Activated CD8-positive, alpha-beta T cell treated with anti-CD3 and anti-CD28 coated beads, Interleukin-2, amount 10 ng/mL, durations not matched to agents 7 days and 5 days (primary cell): ENCODE measurements at regions of chr11 and their contacts with region 1.

Region 1: DNA sequence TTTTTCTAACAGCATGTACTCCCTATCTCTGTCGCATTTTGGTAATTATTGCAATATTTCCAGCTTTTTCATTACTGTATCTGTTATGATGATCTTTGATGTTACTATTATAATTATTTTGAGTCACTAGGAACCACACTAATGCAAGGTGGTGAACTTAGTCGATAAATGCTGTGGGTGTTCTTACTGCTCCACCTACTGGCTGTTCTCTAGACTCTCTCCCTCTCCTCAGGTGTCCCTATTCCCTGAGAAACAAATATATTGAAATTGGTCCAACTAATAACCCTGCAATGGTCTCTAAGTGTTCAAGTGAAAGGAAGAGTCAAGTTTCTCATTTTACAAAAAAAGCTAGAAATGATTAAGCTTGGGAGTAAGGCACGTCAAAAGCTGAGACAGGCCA is 10.5 kb downstream of the ARL14EP start:
- DNase-seq: no peak
- ATAC-seq: no peak
- H3K4me3 Mint-ChIP-seq: no peak overlapping the region
- H3K27ac Mint-ChIP-seq: no peak overlapping the region
- H3K4me1 Mint-ChIP-seq: peaks cover 12% of the 10 kb centered on the region
- H3K27me3 Mint-ChIP-seq: no peaks in the 10 kb centered on the region

Region 2: GRCh38 chr11:30128269-30128932 is 205.0 kb before region 1 on chr11:
- CTCF ChIA-PET with region 1: interaction called, 10 read pairs
- POLR2A ChIA-PET with region 1: no interaction called
- DNase-seq: peak; percentile 22
- ATAC-seq: no peak
- H3K4me3 Mint-ChIP-seq: no peak overlapping the region
- H3K27ac Mint-ChIP-seq: no peak overlapping the region
- H3K4me1 Mint-ChIP-seq: no peaks in the 10 kb centered on the region
- H3K27me3 Mint-ChIP-seq: no peaks in the 10 kb centered on the region

Region 3: GRCh38 chr11:30295178-30295885 is 38.1 kb before region 1 on chr11:
- CTCF ChIA-PET with region 1: no interaction called
- POLR2A ChIA-PET with region 1: no interaction called
- DNase-seq: no peak
- ATAC-seq: no peak
- H3K4me3 Mint-ChIP-seq: no peak overlapping the region
- H3K27ac Mint-ChIP-seq: no peak overlapping the region
- H3K4me1 Mint-ChIP-seq: no peaks in the 10 kb centered on the region
- H3K27me3 Mint-ChIP-seq: peaks cover 14% of the 10 kb centered on the region

Region 4: GRCh38 chr11:30314625-30315024 is 18.8 kb before region 1 on chr11:
- CTCF ChIA-PET with region 1: interaction called, 17 read pairs
- POLR2A ChIA-PET with region 1: no interaction called
- DNase-seq: no peak
- ATAC-seq: no peak
- H3K4me3 Mint-ChIP-seq: no peak overlapping the region
- H3K27ac Mint-ChIP-seq: no peak overlapping the region
- H3K4me1 Mint-ChIP-seq: peaks cover 19% of the 10 kb centered on the region
- H3K27me3 Mint-ChIP-seq: peaks cover 8% of the 10 kb centered on the region

Region 5: GRCh38 chr11:30322826-30323710 is 10.3 kb before region 1 on chr11 and contains the start of gene ARL14EP:
- CTCF ChIA-PET with region 1: interaction called, 16 read pairs
- POLR2A ChIA-PET with region 1: interaction called, 5 read pairs
- DNase-seq: peak; percentile 92
- ATAC-seq: peak; percentile 92
- H3K4me3 Mint-ChIP-seq: peak within 1 kb of the TSS; percentile 97
- H3K27ac Mint-ChIP-seq: peak within 1 kb of the TSS; percentile 98
- H3K4me1 Mint-ChIP-seq: peaks cover 46% of the 10 kb centered on the region
- H3K27me3 Mint-ChIP-seq: peaks cover 3% of the 10 kb centered on the region
- total RNA-seq, gene ARL14EP: 27.3 to 30.9 TPM

Region 6: GRCh38 chr11:30346068-30346688 is 12.8 kb after region 1 on chr11:
- CTCF ChIA-PET with region 1: interaction called, 11 read pairs
- POLR2A ChIA-PET with region 1: no interaction called
- DNase-seq: no peak
- ATAC-seq: no peak
- H3K4me3 Mint-ChIP-seq: no peak overlapping the region
- H3K27ac Mint-ChIP-seq: no peak overlapping the region
- H3K4me1 Mint-ChIP-seq: peaks cover 2% of the 10 kb centered on the region
- H3K27me3 Mint-ChIP-seq: no peaks in the 10 kb centered on the region

Region 7: DNA sequence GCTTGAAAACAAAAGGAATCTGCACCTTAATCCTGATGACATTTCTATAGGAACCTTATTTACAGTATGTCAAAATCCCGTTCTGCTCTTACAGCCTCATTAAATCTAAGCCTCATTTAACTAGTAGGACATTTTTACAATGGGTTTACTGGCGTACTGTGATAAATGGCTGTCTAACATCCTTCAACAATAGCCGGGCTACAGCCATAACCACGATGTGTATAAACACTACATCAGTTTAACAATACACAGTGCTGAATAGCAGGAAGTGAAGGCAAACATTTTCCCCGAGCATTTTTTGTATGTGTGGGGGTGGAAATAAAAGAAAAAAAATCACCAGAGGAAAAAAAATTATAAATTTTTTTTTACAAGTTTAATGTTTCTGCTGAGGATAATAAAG is 120.7 kb after region 1 on chr11:
- CTCF ChIA-PET with region 1: no interaction called
- POLR2A ChIA-PET with region 1: no interaction called
- DNase-seq: no peak
- ATAC-seq: no peak
- H3K4me3 Mint-ChIP-seq: no peak overlapping the region
- H3K27ac Mint-ChIP-seq: no peak overlapping the region
- H3K4me1 Mint-ChIP-seq: no peaks in the 10 kb centered on the region
- H3K27me3 Mint-ChIP-seq: peaks cover 2% of the 10 kb centered on the region